Esophagus muscularis mucosa (tissue), 4 donors: ENCODE measurements at regions of chr3 and their contacts with region 1.

Region 1: DNA sequence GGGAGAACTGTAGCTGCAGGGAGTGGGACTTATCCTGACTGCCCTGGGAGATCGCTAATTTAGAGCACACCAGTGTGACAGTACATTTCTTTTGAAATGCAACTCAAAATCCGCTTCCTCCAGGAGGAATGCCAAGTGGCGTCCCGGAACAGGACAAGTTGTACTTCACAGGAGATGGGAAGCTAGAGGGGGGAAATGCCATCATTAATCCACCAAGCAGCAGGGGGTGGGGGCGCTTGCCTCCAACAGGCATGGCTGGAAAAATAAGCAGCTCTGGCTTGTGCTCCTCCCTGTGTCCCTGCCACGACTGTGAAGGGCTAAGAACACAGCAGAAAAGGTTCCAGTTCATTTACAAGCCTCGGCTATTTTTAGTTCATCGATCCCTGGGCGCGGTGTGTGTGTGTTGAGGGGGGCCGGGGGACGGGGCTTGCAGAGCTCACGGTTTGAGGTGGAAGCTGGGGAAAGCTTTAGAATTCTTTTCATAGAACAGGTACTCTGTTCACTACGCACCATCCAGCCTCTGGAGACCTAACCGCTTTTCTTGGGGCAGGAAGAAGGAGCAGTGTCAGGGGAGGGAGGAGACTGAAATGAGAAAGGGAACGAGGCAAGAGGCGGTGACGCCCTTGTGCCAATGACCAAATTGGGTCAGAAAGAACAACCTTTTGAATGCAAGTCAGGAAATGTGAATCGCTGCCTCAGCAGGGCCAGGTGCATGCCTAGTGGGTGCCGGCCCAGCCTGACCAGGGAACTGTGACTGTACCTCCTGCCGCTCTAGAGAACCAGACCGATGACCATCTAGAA is 51.8 kb upstream of the DGKG start:
- DNase-seq: peak; percentile 93
- H3K4me3 ChIP-seq: peak overlapping the region; percentile 43 to 57 (median 46)
- H3K27ac ChIP-seq: peak overlapping the region; percentile 90 to 97 (median 92)
- H3K4me1 ChIP-seq: peaks cover 16 to 74% (median 60%) of the 10 kb centered on the region in 4 donors
- H3K27me3 ChIP-seq: no peaks in the 10 kb centered on the region
- CTCF ChIP-seq: no peak
- EP300 ChIP-seq: peak; percentile 92
- POLR2A ChIP-seq: no peak

Region 2: DNA sequence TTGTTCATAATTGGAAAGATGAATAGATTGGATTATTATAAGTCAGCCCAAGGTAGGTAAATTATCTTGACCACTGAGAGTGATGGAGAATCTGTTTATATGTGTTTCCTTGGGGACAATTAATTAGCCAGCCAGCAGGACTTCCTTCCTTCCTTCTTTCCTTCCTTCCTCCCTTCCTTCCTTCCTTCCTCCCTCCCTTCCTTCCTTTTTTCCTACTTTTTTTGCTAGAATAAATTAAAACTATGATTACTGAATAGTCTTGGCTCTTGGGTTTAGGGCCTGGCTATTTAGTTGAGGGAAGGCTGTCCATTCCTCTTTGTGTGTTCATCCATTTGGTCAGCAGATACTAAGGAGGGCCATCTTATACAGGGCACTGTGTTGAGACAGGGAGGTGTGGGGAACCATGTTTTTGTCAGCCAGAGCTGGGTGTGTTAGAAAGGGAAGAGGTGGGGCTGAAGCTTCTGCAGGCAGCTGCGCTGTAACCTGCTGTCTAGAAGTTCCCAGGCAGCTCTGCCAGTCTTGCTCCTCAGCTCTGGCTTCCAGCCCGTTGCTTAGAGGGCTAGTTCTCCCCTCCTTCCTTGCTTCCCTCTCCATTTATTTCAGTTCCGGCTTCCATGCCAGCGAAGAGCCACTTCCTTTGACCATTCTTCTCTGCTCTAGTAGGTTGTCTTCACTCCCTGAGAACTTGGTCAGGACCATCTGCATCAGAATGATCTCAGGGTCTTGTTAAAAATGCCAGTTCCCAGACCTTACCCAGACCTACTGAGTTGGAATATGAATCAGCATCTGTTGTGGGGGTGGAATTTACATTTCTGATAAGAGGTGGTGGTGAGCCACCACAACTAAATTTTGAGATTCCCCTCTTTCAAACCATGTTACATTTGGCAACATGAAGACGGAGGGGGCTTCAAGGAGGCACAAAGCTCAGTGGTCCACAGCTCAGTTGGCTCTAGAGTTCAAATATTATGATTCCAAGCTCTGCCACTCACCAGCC is 165.7 kb before region 1 on chr3:
- intact Hi-C with region 1: no loop called
- DNase-seq: no peak
- H3K4me3 ChIP-seq: no peak overlapping the region
- H3K27ac ChIP-seq: peak overlapping the region in 3 of 4 donors; percentile 15 to 23 (median 15)
- H3K4me1 ChIP-seq: peaks cover 0 to 17% (median 12%) of the 10 kb centered on the region in 4 donors
- H3K27me3 ChIP-seq: no peaks in the 10 kb centered on the region
- CTCF ChIP-seq: no peak
- EP300 ChIP-seq: no peak
- POLR2A ChIP-seq: no peak

Region 3: DNA sequence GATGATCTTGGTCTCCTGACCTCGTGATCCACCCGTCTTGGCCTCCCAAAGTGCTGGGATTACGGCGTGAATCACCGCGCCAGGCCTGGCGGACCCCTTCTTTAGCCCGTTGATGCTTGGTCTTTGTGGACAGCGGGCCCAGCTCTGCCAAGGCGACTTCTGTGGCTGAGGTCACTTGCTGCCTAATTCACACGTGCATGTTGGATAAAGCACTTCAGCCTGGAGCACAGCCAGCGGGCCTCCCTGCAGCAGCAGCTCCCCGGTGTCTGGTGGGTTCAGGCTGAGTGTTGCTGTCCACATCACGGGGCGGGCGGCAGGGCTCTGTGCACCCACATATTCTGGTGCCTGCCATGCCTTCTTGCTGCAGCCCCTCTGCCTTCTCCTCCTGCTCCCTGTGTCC is 140.2 kb before region 1 on chr3:
- intact Hi-C with region 1: loop called (anchors 5 kb)
- DNase-seq: no peak
- H3K4me3 ChIP-seq: no peak overlapping the region
- H3K27ac ChIP-seq: peak overlapping the region; percentile 1 to 51 (median 28)
- H3K4me1 ChIP-seq: peaks cover 0 to 25% (median 20%) of the 10 kb centered on the region in 4 donors
- H3K27me3 ChIP-seq: no peaks in the 10 kb centered on the region
- CTCF ChIP-seq: no peak
- EP300 ChIP-seq: no peak
- POLR2A ChIP-seq: no peak